Aorta (tissue), 5 donors: ENCODE measurements at regions of chr3 and their contacts with region 1.

Region 1: GRCh38 chr3:129183569-129184395 is at the start of gene CNBP:
- DNase-seq: peak; percentile 96 to 97
- ATAC-seq: peak; percentile 100
- H3K4me3 ChIP-seq: peak within 1 kb of the TSS; percentile 70
- H3K27ac ChIP-seq: peak within 1 kb of the TSS; percentile 93 to 97
- H3K4me1 ChIP-seq: peaks cover 0 to 2% of the 10 kb centered on the region in 2 donors
- H3K27me3 ChIP-seq: no peaks in the 10 kb centered on the region
- total RNA-seq, gene CNBP: 287 to 306 TPM

Region 2: GRCh38 chr3:129139911-129140310 is 43.9 kb before region 1 on chr3:
- intact Hi-C with region 1: no loop called
- DNase-seq: no peak
- ATAC-seq: no peak
- H3K4me3 ChIP-seq: no peak overlapping the region
- H3K27ac ChIP-seq: no peak overlapping the region
- H3K4me1 ChIP-seq: no peaks in the 10 kb centered on the region
- H3K27me3 ChIP-seq: no peaks in the 10 kb centered on the region

Region 3: GRCh38 chr3:129249276-129250065 is 65.7 kb after region 1 on chr3 and contains the start of gene COPG1:
- intact Hi-C with region 1: loop called (anchors 5 kb)
- DNase-seq: peak; percentile 90 to 95
- ATAC-seq: peak; percentile 97
- H3K4me3 ChIP-seq: peak within 1 kb of the TSS; percentile 61 to 75
- H3K27ac ChIP-seq: peak within 1 kb of the TSS in 1 of 2 donors; percentile 64
- H3K4me1 ChIP-seq: peaks cover 0 to 2% of the 10 kb centered on the region in 2 donors
- H3K27me3 ChIP-seq: no peaks in the 10 kb centered on the region
- total RNA-seq, gene COPG1: 149 to 155 TPM

Region 4: GRCh38 chr3:129289201-129289921 is 105.6 kb after region 1 on chr3:
- intact Hi-C with region 1: no loop called
- DNase-seq: no peak
- ATAC-seq: no peak
- H3K4me3 ChIP-seq: no peak overlapping the region
- H3K27ac ChIP-seq: no peak overlapping the region
- H3K4me1 ChIP-seq: no peaks in the 10 kb centered on the region
- H3K27me3 ChIP-seq: no peaks in the 10 kb centered on the region